ENCODE measurements at regions of chr2 and their contacts with region 1.

Region 1: GRCh38 chr2:204539019-204539385 is 6.3 kb upstream of the PARD3B start:
- DNase-seq: no peak
- H3K4me3 ChIP-seq: no peak overlapping the region
- H3K27ac ChIP-seq: no peak overlapping the region
- H3K4me1 ChIP-seq: peaks cover 29% of the 10 kb centered on the region
- H3K27me3 ChIP-seq: no peaks in the 10 kb centered on the region
- CTCF ChIP-seq: no peak

Region 2: DNA sequence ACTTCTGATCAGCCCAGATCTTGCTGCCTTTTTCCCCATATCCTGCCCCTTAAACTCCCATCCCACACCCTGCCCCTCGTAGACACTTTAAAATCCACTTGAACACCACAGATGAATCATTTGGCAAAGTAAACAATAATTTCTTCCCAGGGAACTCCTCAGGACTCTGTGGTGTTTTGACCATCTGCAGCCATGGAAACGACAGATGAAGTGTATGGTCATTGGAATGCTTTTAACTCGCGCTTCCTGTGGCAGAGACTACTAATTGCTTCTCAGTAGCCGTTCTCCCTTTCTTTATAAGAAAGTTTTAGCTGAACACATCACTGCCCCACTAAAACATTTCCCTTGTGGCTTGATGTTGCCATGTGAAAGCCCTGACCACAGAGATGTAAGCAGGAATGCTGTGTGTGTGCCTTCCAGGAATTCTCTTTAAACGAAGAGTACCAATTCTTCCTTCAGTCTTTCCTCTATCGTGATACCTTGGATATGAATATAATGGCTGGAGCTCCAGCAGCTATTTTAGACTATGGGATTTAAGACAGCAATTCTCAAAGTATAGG is 86.5 kb before region 1 on chr2:
- CTCF ChIA-PET with region 1: interaction called, 13 read pairs
- POLR2A ChIA-PET with region 1: no interaction called
- intact Hi-C with region 1: no loop called
- DNase-seq: peak; percentile 60 to 95
- H3K4me3 ChIP-seq: no peak overlapping the region
- H3K27ac ChIP-seq: peak overlapping the region; percentile 36; the same call in 1 of the 2 replicates
- H3K4me1 ChIP-seq: peaks cover 15% of the 10 kb centered on the region
- H3K27me3 ChIP-seq: no peaks in the 10 kb centered on the region
- CTCF ChIP-seq: no peak

Measured in PC-9 (cell line).